Dorsolateral prefrontal cortex (tissue), 120 donors: ENCODE measurements at regions of chr11 and their contacts with region 1.

Region 1: DNA sequence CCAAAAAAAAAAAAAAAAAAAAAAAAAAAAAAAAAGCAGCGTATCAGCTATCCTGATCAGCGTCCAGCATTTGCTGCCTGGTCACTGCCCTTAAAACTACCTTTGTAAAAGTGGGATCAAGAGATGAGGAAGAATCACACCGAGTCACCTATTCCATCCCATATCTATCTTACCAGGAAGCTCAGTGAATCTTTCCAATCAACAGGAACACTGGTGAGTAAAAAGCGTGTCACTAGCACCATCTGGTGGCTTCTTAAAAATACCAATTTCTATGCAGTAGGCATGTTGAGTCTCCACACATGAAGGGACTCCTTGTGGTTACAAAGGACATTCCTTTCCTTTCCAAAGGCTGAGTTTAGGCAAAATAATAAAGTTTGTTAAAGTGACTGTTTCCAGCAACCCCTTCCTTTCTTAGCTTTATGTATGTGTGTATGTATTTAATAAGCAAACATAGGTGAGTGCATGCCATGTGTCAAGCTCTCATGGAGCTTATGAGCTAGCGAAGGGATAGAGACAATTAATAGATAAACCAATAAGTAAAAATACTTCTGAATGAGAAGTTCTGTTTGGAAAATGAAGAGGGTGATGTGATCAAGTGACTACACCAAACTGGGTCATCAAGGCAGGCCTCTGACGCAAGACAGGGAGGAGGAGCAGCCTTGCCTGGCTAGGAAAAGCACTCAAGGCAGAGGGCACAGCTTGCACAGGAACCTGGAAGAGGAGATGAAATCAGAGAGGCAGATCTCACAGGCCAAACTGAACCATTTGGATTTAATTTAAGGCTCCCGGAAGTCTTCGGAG is 13.9 kb upstream of the TP53AIP1 start:
- DNase-seq: peak in 2 of 10 donors; percentile 44 to 48
- H3K4me3 ChIP-seq: no peak overlapping the region
- H3K27ac ChIP-seq: peak overlapping the region in 1 of 59 donors; percentile 1
- H3K27me3 ChIP-seq: no peaks in the 10 kb centered on the region
- CTCF ChIP-seq: peak; percentile 28 to 94 (median 79)

Region 2: GRCh38 chr11:128039140-128040021 is 917.2 kb before region 1 on chr11:
- intact Hi-C with region 1: loop called in 1 of 2 experiments (anchors 5 kb)
- DNase-seq: no peak
- H3K4me3 ChIP-seq: no peak overlapping the region
- H3K27ac ChIP-seq: no peak overlapping the region
- H3K27me3 ChIP-seq: peaks cover 0 to 31% (median 0%) of the 10 kb centered on the region in 45 donors
- CTCF ChIP-seq: peak in 1 of 56 donors; percentile 15

Region 3: DNA sequence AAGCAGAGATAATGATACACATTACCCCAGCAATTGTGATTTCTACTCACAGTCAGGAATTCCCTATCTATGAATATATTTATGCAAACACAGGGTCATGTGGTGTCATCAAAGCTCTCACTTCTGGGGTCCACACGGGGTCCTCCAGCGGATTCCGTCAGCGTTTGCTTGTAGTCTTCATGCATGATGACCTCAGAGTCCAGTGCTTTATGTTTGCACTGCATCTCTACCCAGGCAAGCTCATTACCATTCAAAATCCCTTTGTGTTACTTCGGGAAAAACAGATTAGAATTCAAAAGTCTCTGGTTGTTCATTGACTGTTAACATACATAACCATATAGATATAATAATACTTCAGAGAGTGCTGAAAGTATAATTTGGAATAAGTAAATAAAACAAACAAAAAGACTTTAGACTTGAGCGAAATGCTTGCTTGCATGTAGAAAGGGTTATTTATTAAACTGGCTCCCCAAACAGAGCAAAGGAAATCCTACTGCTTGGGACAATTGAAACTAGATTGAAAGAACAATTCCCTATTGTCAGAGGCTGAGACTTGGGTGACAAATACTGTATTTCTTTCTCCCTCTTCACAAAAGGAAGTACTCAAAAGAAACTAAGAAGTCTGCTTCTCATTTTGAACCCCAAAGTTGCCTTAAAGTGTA is 792.4 kb before region 1 on chr11:
- intact Hi-C with region 1: loop called in 1 of 2 experiments (anchors 10 kb)
- DNase-seq: no peak
- H3K4me3 ChIP-seq: no peak overlapping the region
- H3K27ac ChIP-seq: no peak overlapping the region
- H3K27me3 ChIP-seq: peaks cover 0 to 35% (median 0%) of the 10 kb centered on the region in 45 donors
- CTCF ChIP-seq: no peak

Region 4: DNA sequence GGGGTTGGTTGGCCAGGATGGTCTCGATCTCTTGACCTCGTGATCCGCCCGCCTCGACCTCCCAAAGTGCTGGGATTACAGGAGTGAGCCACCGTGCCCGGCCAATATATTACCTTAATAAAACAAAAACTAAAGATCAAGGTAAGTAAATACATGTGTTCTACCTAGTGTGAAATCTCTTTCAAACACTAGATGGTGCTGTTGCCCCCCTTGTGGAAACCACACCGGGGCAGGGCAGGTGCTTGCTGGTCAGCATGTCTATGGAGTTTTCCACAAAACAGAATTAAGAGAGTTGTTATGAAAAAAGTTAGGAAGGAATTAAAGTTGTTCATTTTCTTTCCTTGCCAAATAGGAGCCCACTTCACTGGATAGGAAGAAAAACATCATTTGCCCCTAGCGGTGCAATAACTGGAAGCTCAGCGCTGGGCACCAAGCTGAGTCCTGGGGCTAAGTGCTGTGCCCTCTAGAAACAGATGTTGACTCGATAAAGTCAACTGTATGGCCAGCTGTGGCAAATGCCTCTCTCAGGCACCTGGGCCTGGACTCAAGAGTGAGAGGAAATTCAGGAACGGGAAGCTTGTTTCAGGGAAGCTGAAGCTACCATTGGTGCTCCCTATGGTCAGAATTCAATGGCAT is 71.8 kb before region 1 on chr11:
- intact Hi-C with region 1: loop called (anchors 1 to 2 kb)
- DNase-seq: peak in 5 of 10 donors; percentile 44 to 68 (median 63)
- H3K4me3 ChIP-seq: no peak overlapping the region
- H3K27ac ChIP-seq: no peak overlapping the region
- H3K27me3 ChIP-seq: peaks cover 0 to 10% (median 0%) of the 10 kb centered on the region in 45 donors
- CTCF ChIP-seq: peak; percentile 77 to 96 (median 86)

Region 5: GRCh38 chr11:128917144-128917724 is 39.4 kb before region 1 on chr11:
- intact Hi-C with region 1: no loop called
- DNase-seq: no peak
- H3K4me3 ChIP-seq: no peak overlapping the region
- H3K27ac ChIP-seq: no peak overlapping the region
- H3K27me3 ChIP-seq: peaks cover 0 to 29% (median 0%) of the 10 kb centered on the region in 45 donors
- CTCF ChIP-seq: no peak

Region 6: DNA sequence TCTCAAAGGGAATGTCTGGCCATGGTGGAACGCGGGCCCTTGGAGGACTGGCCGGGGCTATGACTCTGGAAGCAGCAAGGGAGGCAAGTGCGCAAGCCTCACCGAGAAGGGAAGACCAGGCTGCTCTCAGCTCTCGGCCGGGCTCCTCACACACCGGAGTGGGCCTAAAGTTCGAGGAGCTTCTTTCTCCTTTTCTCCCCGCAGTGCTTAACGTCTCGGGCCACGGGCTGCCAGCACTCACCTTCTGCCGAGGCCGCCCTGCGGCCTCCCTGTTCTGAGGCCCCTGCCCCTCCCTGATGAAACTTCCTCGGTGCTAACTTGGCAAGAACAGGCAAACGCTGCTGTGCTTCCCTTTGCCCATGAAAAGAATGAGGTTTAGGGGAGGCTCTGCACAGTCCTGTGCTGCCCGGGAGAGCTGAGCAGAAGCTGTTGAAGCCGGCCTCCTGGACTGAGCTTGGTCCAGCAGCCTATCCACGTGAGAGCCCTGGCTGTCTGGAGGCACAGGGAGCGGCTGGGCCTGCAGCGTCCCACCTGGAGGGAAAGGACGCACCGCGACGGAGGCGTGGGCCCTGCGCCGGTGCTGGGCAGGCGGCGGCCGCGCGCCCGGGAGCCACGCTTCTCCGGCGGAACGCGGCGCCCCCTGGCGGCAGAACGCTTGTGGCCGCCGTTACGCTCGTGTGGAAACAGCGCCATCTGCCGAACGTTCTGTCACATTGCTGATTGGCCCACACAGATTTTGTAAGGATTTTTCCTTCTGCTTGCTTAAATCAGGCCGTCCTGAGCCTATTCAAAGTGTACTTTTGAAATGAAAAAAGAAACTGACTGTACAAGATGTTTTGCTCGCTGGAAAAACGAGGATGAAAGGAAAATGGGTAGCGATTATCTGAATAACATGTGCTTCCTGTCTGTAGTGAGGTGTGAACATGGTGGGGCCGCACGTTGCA is 794.0 kb after region 1 on chr11:
- intact Hi-C with region 1: loop called in 1 of 2 experiments (anchors 5 kb)
- DNase-seq: peak; percentile 37 to 86 (median 62)
- H3K4me3 ChIP-seq: peak overlapping the region in 55 of 59 donors; percentile 9 to 62 (median 43)
- H3K27ac ChIP-seq: peak overlapping the region in 6 of 59 donors; percentile 2 to 65 (median 34)
- H3K27me3 ChIP-seq: peaks cover 0 to 9% (median 0%) of the 10 kb centered on the region in 45 donors
- CTCF ChIP-seq: peak; percentile 83 to 100 (median 100)